ENCODE measurements at regions of chr16 and their contacts with region 1.

Region 1: DNA sequence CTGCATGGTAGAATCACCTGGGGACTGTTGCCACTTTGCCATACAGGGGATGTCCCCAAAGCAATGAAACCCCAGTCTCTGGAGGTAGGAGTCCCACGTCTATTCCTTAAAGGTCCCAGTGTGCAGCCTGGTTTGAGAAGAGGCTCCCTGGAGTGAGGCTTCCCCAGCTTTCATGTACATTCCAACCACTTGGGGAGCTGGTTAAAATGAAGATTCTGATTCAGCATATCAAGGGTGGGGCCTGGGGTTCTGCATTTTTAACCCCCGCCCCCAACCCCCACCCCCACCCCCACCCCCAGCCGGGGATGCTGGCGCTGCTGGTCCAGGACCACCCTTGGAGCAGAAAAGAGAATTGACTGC is 241.2 kb downstream of the FOXL1 start:
- DNase-seq: no peak
- H3K4me3 ChIP-seq: no peak overlapping the region
- CTCF ChIP-seq: peak; percentile 24

Region 2: DNA sequence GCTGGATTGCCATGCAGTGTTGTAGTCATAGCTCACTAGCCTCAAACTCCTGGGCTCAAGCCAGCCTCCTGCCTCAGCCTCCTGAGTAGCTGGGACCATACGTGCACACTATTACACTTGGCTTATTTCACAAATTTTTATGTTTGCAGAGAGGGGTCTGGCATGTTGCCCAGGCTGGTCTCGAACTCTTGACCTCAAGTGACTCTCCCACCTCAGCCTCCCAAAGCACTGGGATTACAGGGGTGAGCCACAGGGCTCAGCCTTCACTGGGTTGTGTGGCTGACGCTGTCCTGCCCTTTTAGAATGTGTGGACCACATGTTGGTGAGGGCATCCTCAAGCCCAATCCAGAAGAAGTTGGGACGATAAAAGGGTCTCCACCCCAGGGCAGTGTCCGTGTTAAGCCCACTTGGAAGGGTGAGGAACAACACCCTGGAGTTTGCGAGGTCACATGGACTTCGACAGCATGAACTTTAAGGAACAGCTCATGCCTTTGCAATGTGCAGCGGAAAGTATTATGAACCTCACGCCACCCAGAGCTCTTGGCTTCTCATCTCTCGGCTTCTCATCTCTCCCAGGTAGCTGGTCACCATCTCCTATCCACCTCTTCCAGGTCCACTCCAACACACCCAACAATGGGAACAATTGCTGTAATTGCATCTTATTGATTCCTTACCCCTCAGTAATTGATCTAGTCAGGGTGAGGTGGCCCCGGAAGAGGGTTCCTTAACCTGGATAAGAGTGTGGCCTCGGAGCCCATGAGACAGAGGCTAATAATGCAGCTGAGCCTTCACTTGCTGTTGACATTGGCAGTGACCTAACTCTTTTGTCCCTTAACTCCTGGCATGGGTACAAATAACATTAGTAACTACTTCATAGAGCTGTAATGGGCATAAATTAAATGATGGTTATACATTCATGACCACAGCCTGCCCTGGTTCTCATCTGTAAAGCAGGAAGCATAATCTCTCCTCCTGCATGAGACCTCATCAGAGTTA is 234.5 kb before region 1 on chr16:
- in situ Hi-C with region 1: loop called (anchors 5 kb)
- DNase-seq: no peak
- H3K4me3 ChIP-seq: no peak overlapping the region
- CTCF ChIP-seq: no peak

Region 3: DNA sequence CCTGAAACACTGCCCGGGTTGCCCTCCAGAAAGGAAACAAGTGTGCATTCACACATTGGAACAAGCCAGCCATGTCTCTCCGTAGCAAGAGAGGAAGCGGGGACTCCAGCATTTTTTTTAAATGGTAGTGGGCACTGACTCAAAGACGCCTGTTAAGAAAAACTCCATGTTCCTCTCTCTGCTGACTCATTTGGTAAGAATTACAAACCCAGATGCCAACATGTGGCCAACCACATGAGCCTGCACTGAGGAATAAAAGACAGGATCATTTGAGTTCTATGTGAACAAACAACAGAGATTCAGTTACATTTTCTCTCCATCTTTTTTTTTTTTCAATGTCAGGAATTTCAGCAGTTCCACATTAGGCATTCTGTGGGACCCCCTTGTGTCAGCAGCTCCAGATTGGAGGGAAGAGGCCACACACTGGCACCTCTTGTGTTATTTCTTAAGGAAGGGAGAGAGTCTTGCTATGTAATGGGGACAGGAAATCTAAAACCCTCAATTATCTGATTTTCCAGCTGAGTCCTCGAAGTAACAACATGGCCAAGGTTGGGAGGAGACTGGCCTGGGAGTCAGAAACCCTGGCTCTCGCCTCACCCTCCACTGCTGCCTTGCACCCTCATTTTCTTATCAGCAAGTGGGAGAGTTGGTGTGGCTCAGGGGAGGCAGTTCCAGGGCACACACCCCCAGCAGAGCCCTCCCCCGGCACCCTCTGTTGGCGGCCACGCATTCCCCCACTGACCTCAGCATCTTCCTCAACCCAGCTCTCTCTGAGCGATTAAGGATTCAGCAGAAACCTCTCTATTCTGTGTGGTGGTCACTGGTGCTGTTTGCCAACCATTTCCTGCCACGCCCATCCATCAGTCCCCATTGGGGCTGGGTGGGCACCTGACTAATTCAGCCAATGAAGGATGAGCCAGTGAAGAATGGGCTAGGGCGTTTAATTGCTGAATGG is 68.2 kb before region 1 on chr16:
- in situ Hi-C with region 1: no loop called
- DNase-seq: peak; percentile 88
- H3K4me3 ChIP-seq: no peak overlapping the region
- CTCF ChIP-seq: no peak

Region 4: DNA sequence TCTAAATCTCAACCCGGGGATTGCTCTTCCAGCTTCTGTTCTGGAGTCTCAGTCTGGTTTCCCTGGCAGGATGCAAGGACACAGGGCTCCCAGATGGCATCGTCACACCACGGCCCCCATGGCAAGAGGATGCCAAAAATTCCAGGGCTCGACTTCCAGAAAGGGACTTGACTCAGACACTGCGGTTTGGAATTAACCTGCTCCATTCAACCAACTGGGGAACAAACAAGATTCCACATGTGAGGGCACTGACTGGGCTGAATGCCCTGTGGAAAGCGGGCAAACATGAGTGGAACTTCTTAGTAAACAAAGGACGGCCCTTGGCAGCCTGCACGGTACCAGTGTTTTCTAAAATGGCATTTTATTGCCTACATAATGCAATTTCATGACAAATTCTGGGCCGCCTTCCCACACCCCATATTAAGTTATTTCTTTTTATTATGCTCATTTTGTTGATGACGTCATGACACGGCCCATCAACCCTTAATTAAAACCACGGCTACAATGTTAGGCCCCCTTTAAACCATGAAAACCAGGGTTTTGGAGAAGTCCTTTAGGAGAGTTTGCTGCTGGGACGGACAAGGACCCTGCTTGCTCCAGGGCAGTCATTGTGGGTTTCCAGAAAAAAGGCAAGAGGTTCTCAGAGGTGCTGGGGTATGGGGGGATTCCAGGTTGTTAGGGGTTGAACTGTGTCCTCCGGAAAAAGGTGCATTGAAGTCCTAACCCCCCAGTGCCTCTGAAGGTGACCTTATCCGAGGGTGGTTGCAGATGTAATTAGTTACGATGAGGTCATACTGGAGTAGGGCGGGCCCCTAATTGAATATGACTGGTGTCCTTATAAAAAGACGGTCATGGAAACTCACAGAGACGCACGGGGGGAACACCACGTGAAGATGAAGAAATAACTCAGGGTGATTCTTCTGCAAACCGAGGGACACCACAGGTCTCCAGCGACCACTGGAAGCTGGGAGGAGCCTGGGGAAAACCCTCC is 35.6 kb before region 1 on chr16:
- in situ Hi-C with region 1: loop called (anchors 5 kb)
- DNase-seq: no peak
- H3K4me3 ChIP-seq: no peak overlapping the region
- CTCF ChIP-seq: no peak

Region 5: GRCh38 chr16:86874141-86874540 is 54.6 kb after region 1 on chr16:
- in situ Hi-C with region 1: loop called (anchors 5 kb)
- DNase-seq: no peak
- H3K4me3 ChIP-seq: no peak overlapping the region
- CTCF ChIP-seq: peak; percentile 60

Measured in astrocyte of the cerebellum (primary cell).